ENCODE measurements at regions of chr18 and their contacts with region 1.

Region 1: DNA sequence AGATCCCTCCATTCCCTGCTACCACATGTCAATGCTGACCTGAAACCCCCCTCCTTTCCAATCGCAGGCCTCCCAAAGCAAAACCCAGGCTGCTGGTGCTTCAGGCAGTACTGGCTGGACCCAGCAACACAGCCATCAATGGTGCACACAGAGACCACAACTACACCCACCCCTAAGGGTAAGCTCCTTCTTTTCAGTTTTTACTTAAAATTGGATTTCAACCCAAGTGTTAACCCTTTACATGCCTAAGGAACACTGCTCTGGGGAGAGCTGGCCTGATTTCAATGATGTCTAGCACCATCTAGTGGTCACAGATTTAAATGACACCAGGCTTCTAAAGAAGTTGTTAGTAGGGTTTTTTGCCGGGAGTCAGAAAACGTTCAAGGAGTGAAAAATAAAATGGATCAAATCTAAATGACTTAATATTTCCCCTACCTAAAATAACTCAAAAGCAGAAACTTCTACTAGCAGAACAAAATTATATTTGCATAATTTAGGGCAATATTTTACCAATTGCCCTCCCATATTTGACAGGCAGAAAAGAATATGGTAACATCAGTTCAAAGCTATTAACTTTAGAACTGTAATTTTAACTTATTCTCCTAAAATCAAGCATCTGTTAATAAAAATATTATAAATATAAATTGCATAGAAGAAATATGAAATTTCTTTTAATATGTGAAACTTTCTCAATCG is 24.6 kb downstream of the FECH start:
- DNase-seq: peak; percentile 49
- H3K4me3 ChIP-seq: no peak overlapping the region
- H3K27ac ChIP-seq: no peak overlapping the region
- H3K4me1 ChIP-seq: no peaks in the 10 kb centered on the region
- H3K27me3 ChIP-seq: no peaks in the 10 kb centered on the region
- CTCF ChIP-seq: peak; percentile 59 to 75
- POLR2A ChIP-seq: no peak

Region 2: GRCh38 chr18:56702946-56703345 is 858.9 kb before region 1 on chr18:
- CTCF ChIA-PET with region 1: interaction called, 25 read pairs
- POLR2A ChIA-PET with region 1: no interaction called
- dilution Hi-C with region 1: no loop called
- intact Hi-C with region 1: loop called (anchors 5 kb)
- DNase-seq: peak; percentile 59
- H3K4me3 ChIP-seq: no peak overlapping the region
- H3K27ac ChIP-seq: no peak overlapping the region
- H3K4me1 ChIP-seq: no peaks in the 10 kb centered on the region
- H3K27me3 ChIP-seq: no peaks in the 10 kb centered on the region
- CTCF ChIP-seq: peak; percentile 27 to 28
- POLR2A ChIP-seq: no peak

Region 3: GRCh38 chr18:56748698-56749268 is 813.1 kb before region 1 on chr18:
- CTCF ChIA-PET with region 1: interaction called, 18 read pairs
- POLR2A ChIA-PET with region 1: no interaction called
- dilution Hi-C with region 1: no loop called
- intact Hi-C with region 1: loop called (anchors 1 kb)
- DNase-seq: peak; percentile 60
- H3K4me3 ChIP-seq: no peak overlapping the region
- H3K27ac ChIP-seq: no peak overlapping the region
- H3K4me1 ChIP-seq: peaks cover 4% of the 10 kb centered on the region
- H3K27me3 ChIP-seq: no peaks in the 10 kb centered on the region
- CTCF ChIP-seq: peak; percentile 24 to 40
- POLR2A ChIP-seq: no peak

Region 4: GRCh38 chr18:57505231-57505630 is 56.6 kb before region 1 on chr18:
- CTCF ChIA-PET with region 1: no interaction called
- POLR2A ChIA-PET with region 1: no interaction called
- dilution Hi-C with region 1: no loop called
- intact Hi-C with region 1: loop called (anchors 10 kb)
- DNase-seq: no peak
- H3K4me3 ChIP-seq: no peak overlapping the region
- H3K27ac ChIP-seq: no peak overlapping the region
- H3K4me1 ChIP-seq: no peaks in the 10 kb centered on the region
- H3K27me3 ChIP-seq: no peaks in the 10 kb centered on the region
- CTCF ChIP-seq: no peak
- POLR2A ChIP-seq: no peak

Region 5: GRCh38 chr18:57550510-57550909 is 11.4 kb before region 1 on chr18:
- CTCF ChIA-PET with region 1: interaction called, 10 read pairs
- POLR2A ChIA-PET with region 1: no interaction called
- dilution Hi-C with region 1: no loop called
- intact Hi-C with region 1: no loop called
- DNase-seq: no peak
- H3K4me3 ChIP-seq: no peak overlapping the region
- H3K27ac ChIP-seq: no peak overlapping the region
- H3K4me1 ChIP-seq: no peaks in the 10 kb centered on the region
- H3K27me3 ChIP-seq: no peaks in the 10 kb centered on the region
- CTCF ChIP-seq: no peak
- POLR2A ChIP-seq: no peak

Region 6: DNA sequence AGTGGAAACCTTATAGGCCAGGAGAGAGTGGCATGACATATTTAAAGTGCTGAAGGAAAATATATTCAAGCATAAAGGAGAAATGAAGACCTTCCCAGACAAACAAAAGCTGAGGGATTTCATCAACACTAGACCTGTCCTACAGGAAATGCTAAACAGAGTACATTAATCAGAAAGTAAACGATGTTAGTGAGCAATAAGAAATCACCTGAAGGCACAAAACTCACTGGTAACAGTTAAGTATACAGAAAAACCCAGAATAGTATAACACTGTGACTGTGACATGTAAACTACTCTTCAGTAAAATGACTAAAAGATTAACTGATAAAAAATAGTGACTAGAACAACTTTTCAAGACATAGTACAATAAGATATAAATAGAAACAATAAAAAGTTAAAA is 153.8 kb after region 1 on chr18:
- CTCF ChIA-PET with region 1: no interaction called
- POLR2A ChIA-PET with region 1: no interaction called
- dilution Hi-C with region 1: no loop called
- intact Hi-C with region 1: no loop called
- DNase-seq: no peak
- H3K4me3 ChIP-seq: no peak overlapping the region
- H3K27ac ChIP-seq: no peak overlapping the region
- H3K4me1 ChIP-seq: peaks cover 2% of the 10 kb centered on the region
- H3K27me3 ChIP-seq: no peaks in the 10 kb centered on the region
- CTCF ChIP-seq: no peak
- POLR2A ChIP-seq: no peak